ENCODE measurements at regions of chr1 and their contacts with region 1.

Region 1: DNA sequence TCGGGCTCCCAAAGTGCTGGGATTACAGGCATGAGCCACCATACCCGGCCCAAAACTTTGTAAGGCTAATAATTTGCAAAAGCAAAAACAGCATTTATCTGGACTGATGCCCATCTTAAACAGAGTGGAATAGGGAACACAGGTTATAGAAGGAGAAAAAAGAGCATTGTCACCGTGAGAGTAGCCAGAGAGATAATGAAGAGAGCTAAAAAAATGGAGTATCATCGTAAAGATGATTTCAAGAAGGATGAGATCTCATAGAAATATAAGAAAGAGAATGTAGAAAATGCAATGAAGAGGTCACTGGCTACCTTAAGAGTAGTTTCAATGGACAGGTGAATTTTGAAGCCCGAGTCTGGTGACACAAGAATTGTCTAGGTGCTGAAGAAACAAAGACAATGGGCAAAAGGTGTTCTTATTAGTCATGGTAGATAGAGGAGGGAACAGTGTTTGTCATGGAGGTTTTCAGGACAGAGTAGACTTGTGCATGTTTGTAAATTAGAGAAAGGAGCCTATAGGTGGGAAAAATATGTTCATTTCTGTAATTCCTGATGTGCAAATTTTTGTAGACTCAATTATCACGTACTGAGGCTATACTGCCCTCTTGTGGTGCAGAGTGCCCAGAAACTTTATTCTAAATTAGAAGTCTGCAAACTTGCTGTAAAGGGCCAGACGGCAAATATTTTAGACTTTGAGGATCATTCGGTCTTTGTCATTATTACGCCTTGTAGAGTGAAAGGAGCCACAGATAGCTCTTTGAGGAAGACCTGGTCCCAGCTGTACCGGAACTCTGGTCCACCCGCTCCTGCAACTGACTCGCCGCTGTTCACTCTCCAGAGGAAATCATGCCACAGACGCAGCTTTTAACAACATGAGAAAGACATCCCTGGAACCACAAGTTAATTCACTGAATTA is 8.1 kb upstream of the TMEM183A start:
- DNase-seq: peak; percentile 32 to 86 (median 44)
- ATAC-seq: peak; percentile 77
- H3K4me3 ChIP-seq: no peak overlapping the region
- H3K27ac ChIP-seq: no peak overlapping the region
- H3K4me1 ChIP-seq: peaks cover 6 to 7% of the 10 kb centered on the region in 2 experiments; a peak in 4 of 5 replicates
- H3K27me3 ChIP-seq: no peaks in the 10 kb centered on the region
- CTCF ChIP-seq: peak; percentile 76 to 96 (median 80)
- EP300 ChIP-seq: 0 out of 2 replicates have a peak, but pooled peaks have one; percentile 29
- POLR2A ChIP-seq: no peak
- RAD21 ChIP-seq: peak; percentile 93 to 95

Region 2: GRCh38 chr1:202348509-202349205 is 650.4 kb before region 1 on chr1 and contains the start of gene PPP1R12B:
- CTCF ChIA-PET with region 1: no interaction called
- POLR2A ChIA-PET with region 1: no interaction called
- in situ Hi-C with region 1: no loop called
- intact Hi-C with region 1: no loop called
- DNase-seq: peak; percentile 90 to 99 (median 92)
- ATAC-seq: peak; percentile 99
- H3K4me3 ChIP-seq: peak within 1 kb of the TSS; percentile 77
- H3K27ac ChIP-seq: peak within 1 kb of the TSS; percentile 81
- H3K4me1 ChIP-seq: peaks cover 5 to 18% of the 10 kb centered on the region in 2 experiments
- H3K27me3 ChIP-seq: no peaks in the 10 kb centered on the region
- CTCF ChIP-seq: no peak
- EP300 ChIP-seq: no peak
- POLR2A ChIP-seq: peak; percentile 86
- RAD21 ChIP-seq: no peak
- polyA plus RNA-seq, gene PPP1R12B: 0.73 to 1.1 TPM

Region 3: GRCh38 chr1:202750758-202751157 is 248.3 kb before region 1 on chr1:
- CTCF ChIA-PET with region 1: interaction called, 4 read pairs
- POLR2A ChIA-PET with region 1: no interaction called
- in situ Hi-C with region 1: loop called (anchors 10 kb)
- intact Hi-C with region 1: loop called (anchors 10 kb)
- DNase-seq: no peak
- ATAC-seq: no peak
- H3K4me3 ChIP-seq: no peak overlapping the region
- H3K27ac ChIP-seq: no peak overlapping the region
- H3K4me1 ChIP-seq: no peaks in the 10 kb centered on the region
- H3K27me3 ChIP-seq: no peaks in the 10 kb centered on the region
- CTCF ChIP-seq: peak in 1 of 3 experiments; percentile 34; a peak in 2 of 6 replicates
- EP300 ChIP-seq: no peak
- POLR2A ChIP-seq: no peak
- RAD21 ChIP-seq: peak; percentile 9 to 38; a peak in 2 of 4 replicates

Region 4: GRCh38 chr1:202852163-202852904 is 146.8 kb before region 1 on chr1:
- CTCF ChIA-PET with region 1: interaction called, 3 read pairs
- POLR2A ChIA-PET with region 1: interaction called, 3 read pairs
- in situ Hi-C with region 1: no loop called
- intact Hi-C with region 1: loop called (anchors 1 kb)
- DNase-seq: peak; percentile 80 to 86 (median 83)
- ATAC-seq: peak; percentile 97
- H3K4me3 ChIP-seq: no peak overlapping the region
- H3K27ac ChIP-seq: no peak overlapping the region
- H3K4me1 ChIP-seq: peaks cover 0 to 4% of the 10 kb centered on the region in 2 experiments; a peak in 3 of 5 replicates
- H3K27me3 ChIP-seq: no peaks in the 10 kb centered on the region; a peak in 1 of 5 replicates
- CTCF ChIP-seq: peak; percentile 91 to 97 (median 94)
- EP300 ChIP-seq: no peak
- POLR2A ChIP-seq: no peak
- RAD21 ChIP-seq: peak; percentile 74 to 91

Region 5: GRCh38 chr1:202938287-202938925 is 60.7 kb before region 1 on chr1:
- CTCF ChIA-PET with region 1: interaction called, 9 read pairs
- POLR2A ChIA-PET with region 1: interaction called, 4 read pairs
- in situ Hi-C with region 1: no loop called
- intact Hi-C with region 1: loop called (anchors 1 kb)
- DNase-seq: peak; percentile 62 to 77 (median 66)
- ATAC-seq: peak; percentile 94
- H3K4me3 ChIP-seq: no peak overlapping the region
- H3K27ac ChIP-seq: no peak overlapping the region
- H3K4me1 ChIP-seq: peaks cover 0 to 14% of the 10 kb centered on the region in 2 experiments; a peak in 3 of 5 replicates
- H3K27me3 ChIP-seq: no peaks in the 10 kb centered on the region
- CTCF ChIP-seq: peak; percentile 47 to 75 (median 51); a peak in 5 of 6 replicates
- EP300 ChIP-seq: peak; percentile 68
- POLR2A ChIP-seq: no peak
- RAD21 ChIP-seq: peak; percentile 79 to 84

Measured in K562 (cell line).